ENCODE measurements at regions of chr10 and their contacts with region 1.

Region 1: GRCh38 chr10:63083904-63084689 is 49.0 kb upstream of the NRBF2 start:
- DNase-seq: peak; percentile 68
- H3K4me3 ChIP-seq: no peak overlapping the region
- H3K27ac ChIP-seq: no peak overlapping the region
- H3K4me1 ChIP-seq: no peaks in the 10 kb centered on the region
- H3K27me3 ChIP-seq: no peaks in the 10 kb centered on the region
- CTCF ChIP-seq: peak; percentile 66 to 73

Region 2: DNA sequence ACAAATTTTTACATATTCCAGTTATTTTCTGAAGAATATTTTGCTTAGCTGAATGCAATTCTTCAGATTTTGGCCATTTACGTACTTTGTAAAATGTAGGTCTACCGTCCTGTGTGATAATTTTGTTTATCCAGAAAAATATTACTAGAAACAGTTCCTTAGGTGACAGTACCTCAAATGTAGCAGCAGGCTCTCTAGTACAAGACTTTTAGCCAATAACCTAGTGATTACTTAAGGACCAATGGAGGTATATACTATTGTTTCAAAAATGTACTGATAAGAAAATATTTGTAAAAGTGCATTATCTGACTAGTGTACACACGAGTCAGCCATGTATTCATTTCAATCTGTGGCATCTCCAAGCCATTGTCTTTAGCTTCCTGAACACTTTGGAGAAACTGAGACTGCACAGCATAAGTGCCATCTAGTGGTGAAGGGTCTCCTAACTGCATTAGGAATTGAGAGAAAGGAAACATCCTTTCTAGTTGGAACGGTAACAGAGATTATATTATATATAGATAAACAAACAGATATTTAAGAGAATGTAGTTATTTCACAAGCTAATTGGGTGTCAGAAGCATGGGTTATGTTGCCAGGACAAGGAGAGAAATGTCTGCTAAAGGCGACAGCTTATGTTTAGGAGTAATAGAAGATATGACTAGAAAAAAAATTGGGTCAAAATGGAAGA is 839.2 kb before region 1 on chr10:
- CTCF ChIA-PET with region 1: no interaction called
- dilution Hi-C with region 1: no loop called
- in situ Hi-C with region 1: no loop called
- intact Hi-C with region 1: loop called (anchors 2 kb)
- DNase-seq: peak; percentile 70
- H3K4me3 ChIP-seq: peak overlapping the region in 2 of 3 experiments; percentile 14 to 69
- H3K27ac ChIP-seq: peak overlapping the region; percentile 84
- H3K4me1 ChIP-seq: peaks cover 18% of the 10 kb centered on the region
- H3K27me3 ChIP-seq: no peaks in the 10 kb centered on the region
- CTCF ChIP-seq: peak; percentile 85 to 96

Region 3: GRCh38 chr10:62492012-62492869 is 591.9 kb before region 1 on chr10:
- CTCF ChIA-PET with region 1: no interaction called
- dilution Hi-C with region 1: no loop called
- in situ Hi-C with region 1: no loop called
- intact Hi-C with region 1: loop called (anchors 1 kb)
- DNase-seq: peak; percentile 72
- H3K4me3 ChIP-seq: no peak overlapping the region
- H3K27ac ChIP-seq: peak overlapping the region; percentile 55
- H3K4me1 ChIP-seq: peaks cover 10% of the 10 kb centered on the region
- H3K27me3 ChIP-seq: no peaks in the 10 kb centered on the region
- CTCF ChIP-seq: peak; percentile 80 to 87

Region 4: GRCh38 chr10:62594093-62594520 is 490.0 kb before region 1 on chr10:
- CTCF ChIA-PET with region 1: no interaction called
- dilution Hi-C with region 1: no loop called
- in situ Hi-C with region 1: loop called in 1 of 2 experiments (anchors 10 kb)
- intact Hi-C with region 1: loop called (anchors 1 kb)
- DNase-seq: peak; percentile 51
- H3K4me3 ChIP-seq: no peak overlapping the region
- H3K27ac ChIP-seq: no peak overlapping the region
- H3K4me1 ChIP-seq: peaks cover 4% of the 10 kb centered on the region
- H3K27me3 ChIP-seq: no peaks in the 10 kb centered on the region
- CTCF ChIP-seq: peak; percentile 92 to 96

Region 5: GRCh38 chr10:62816331-62817120 is 267.6 kb before region 1 on chr10 and contains the start of gene EGR2:
- CTCF ChIA-PET with region 1: interaction called, 5 read pairs
- dilution Hi-C with region 1: no loop called
- in situ Hi-C with region 1: no loop called
- intact Hi-C with region 1: loop called (anchors 1 kb)
- DNase-seq: peak; percentile 93
- H3K4me3 ChIP-seq: peak within 1 kb of the TSS; percentile 63 to 73 (median 66)
- H3K27ac ChIP-seq: peak within 1 kb of the TSS; percentile 70
- H3K4me1 ChIP-seq: peaks cover 35% of the 10 kb centered on the region
- H3K27me3 ChIP-seq: peaks cover 8% of the 10 kb centered on the region
- CTCF ChIP-seq: no peak
- total RNA-seq, gene EGR2: 0.64 to 1.2 TPM

Region 6: DNA sequence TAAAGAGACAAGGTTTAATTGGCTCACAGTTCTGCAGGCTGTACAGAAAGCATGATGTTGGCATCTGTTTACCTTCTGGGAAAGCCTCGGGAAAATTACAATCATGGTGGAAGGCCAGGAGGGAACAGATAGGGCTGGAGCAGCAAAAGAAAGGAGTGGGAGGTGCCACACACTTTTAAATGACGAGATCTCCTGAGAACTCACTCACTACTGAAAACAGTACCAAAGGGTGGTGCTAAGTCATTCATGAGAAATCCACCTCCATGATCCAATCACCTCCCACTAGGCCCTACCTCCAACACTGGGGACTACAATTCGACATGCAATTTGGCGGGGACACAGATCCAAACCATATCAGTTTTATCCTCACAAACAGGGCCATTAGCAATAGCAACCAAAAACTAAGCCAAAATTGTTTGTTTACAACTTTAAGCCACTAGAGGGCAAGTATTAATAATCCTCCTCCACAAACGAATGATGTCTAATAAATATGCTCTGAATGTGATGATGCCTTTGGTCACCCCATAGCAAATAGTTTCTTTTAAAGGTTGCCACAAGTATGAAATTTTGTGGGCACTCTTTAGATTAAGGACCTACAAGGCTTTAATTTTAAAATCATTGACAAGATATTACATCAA is 80.2 kb before region 1 on chr10:
- CTCF ChIA-PET with region 1: no interaction called
- dilution Hi-C with region 1: no loop called
- in situ Hi-C with region 1: no loop called
- intact Hi-C with region 1: loop called (anchors 5 kb)
- DNase-seq: no peak
- H3K4me3 ChIP-seq: no peak overlapping the region
- H3K27ac ChIP-seq: no peak overlapping the region
- H3K4me1 ChIP-seq: peaks cover 14% of the 10 kb centered on the region
- H3K27me3 ChIP-seq: no peaks in the 10 kb centered on the region
- CTCF ChIP-seq: peak; percentile 30 to 40